ENCODE measurements at regions of chr16 and their contacts with region 1.

Region 1: GRCh38 chr16:84354306-84354705 is 14.0 kb upstream of the ATP2C2 start:
- DNase-seq: no peak
- H3K4me3 ChIP-seq: no peak overlapping the region
- H3K27ac ChIP-seq: no peak overlapping the region
- H3K4me1 ChIP-seq: peaks cover 22% of the 10 kb centered on the region
- H3K27me3 ChIP-seq: no peaks in the 10 kb centered on the region
- CTCF ChIP-seq: no peak

Region 2: GRCh38 chr16:84303023-84303422 is 51.3 kb before region 1 on chr16:
- CTCF ChIA-PET with region 1: no interaction called
- dilution Hi-C with region 1: no loop called
- in situ Hi-C with region 1: loop called in 1 of 2 experiments (anchors 5 kb)
- intact Hi-C with region 1: no loop called
- DNase-seq: no peak
- H3K4me3 ChIP-seq: no peak overlapping the region
- H3K27ac ChIP-seq: no peak overlapping the region
- H3K4me1 ChIP-seq: no peaks in the 10 kb centered on the region
- H3K27me3 ChIP-seq: peaks cover 5% of the 10 kb centered on the region
- CTCF ChIP-seq: no peak

Region 3: DNA sequence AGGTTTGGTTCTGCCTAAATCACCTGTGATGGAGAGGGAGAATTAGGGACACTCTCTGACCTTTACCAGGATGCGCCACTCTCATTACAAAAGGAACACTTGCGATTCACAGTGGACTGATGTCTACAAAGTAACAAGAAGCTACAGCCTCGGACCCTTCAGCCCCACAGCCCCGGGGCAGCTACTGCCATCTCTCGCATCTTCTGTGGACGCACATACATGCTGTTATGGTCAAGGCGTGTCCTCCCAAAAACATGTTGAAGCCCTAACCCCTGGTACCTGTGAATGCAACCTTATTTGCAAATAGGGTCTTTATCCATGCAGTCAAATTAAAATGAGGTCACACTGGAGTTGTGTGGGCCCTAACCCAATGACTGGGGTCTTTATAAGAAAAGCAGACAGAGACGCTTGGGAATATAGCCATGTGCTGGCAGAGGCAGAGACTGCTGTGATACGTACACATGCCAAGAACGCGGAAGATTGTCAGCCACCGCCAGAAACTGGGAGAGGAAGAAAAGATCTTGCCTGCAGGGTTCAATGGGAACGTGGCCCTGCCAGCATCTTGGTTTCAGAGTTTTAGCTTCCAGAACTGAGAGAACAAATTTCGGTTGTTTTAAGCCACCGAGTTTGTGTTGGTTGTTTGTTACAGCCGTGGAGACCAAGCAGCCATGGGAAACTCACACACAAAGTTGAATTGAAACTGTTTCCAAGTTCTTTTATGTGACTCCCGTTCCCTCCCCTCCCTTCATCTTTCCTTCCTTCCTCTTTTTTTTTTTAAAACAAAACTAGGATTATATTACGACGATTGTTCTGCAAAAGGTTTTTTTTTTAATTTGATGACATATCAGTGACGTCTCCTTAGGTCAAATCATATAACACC is 37.1 kb after region 1 on chr16:
- CTCF ChIA-PET with region 1: no interaction called
- dilution Hi-C with region 1: loop called (anchors 5 kb)
- in situ Hi-C with region 1: no loop called
- intact Hi-C with region 1: no loop called
- DNase-seq: no peak
- H3K4me3 ChIP-seq: no peak overlapping the region
- H3K27ac ChIP-seq: no peak overlapping the region
- H3K4me1 ChIP-seq: no peaks in the 10 kb centered on the region
- H3K27me3 ChIP-seq: peaks cover 3% of the 10 kb centered on the region
- CTCF ChIP-seq: no peak

Region 4: GRCh38 chr16:84449171-84450140 is 95.2 kb after region 1 on chr16:
- CTCF ChIA-PET with region 1: interaction called, 4 read pairs
- dilution Hi-C with region 1: loop called (anchors 5 kb)
- in situ Hi-C with region 1: no loop called
- intact Hi-C with region 1: no loop called
- DNase-seq: no peak
- H3K4me3 ChIP-seq: no peak overlapping the region
- H3K27ac ChIP-seq: no peak overlapping the region
- H3K4me1 ChIP-seq: no peaks in the 10 kb centered on the region
- H3K27me3 ChIP-seq: no peaks in the 10 kb centered on the region
- CTCF ChIP-seq: no peak

Measured in mammary epithelial cell (primary cell).